Activated CD8-positive, alpha-beta T cell treated with anti-CD3 and anti-CD28 coated beads for 36 hours (primary cell): ENCODE measurements at regions of chr5 and their contacts with region 1.

Region 1: GRCh38 chr5:150458819-150459557 is 9.4 kb upstream of the RPS14 start:
- DNase-seq: peak; percentile 88
- ATAC-seq: peak; percentile 92
- H3K4me3 Mint-ChIP-seq: no peak overlapping the region
- H3K27ac Mint-ChIP-seq: no peak overlapping the region
- H3K4me1 Mint-ChIP-seq: peaks cover 34% of the 10 kb centered on the region
- H3K27me3 Mint-ChIP-seq: no peaks in the 10 kb centered on the region
- CTCF ChIP-seq: peak; percentile 80

Region 2: DNA sequence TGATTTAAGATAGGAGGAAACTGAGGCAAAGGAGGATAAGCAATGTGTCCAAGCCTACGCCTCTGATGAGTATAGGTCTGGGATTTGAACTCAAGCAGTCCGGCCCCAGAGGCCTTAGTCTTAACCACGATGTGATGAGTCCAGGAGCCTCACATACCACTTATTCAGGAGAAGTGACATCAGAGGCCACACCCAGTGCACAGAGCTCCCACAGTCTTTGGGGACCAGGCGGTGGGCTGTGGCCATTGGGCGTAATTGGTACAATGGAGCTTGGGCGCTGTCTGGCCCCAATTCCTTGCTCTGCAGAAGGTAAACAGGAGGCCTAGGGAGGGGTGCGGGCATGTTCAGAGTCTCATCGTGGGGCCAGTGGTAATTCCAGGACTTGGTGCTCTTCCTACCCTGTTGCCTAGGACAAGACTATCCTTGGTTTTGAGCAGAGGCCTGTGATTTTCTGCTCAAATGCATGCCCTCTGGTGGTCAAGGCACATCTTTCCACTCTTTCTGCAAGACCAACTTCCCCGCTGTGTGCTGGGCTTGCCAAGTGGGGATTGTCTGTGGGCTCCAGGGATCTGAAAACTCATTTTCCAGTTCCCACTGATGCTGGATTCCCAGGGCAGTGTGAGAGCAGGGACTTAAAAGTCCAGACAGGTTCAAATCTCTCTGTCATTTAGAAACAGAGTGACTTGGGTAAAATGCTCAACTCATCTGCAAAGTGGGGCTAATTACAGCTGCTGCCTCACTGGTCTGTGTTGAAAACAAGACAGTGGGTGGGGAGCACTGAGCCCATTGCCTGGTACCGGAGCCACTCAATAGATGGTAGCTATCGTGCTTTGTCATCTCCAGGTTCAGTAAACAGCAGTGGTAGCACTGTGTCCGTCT is 64.7 kb after region 1 on chr5:
- CTCF ChIA-PET with region 1: interaction called, 7 read pairs
- POLR2A ChIA-PET with region 1: no interaction called
- intact Hi-C with region 1: loop called (anchors 5 kb)
- DNase-seq: peak; percentile 35
- ATAC-seq: no peak
- H3K4me3 Mint-ChIP-seq: no peak overlapping the region
- H3K27ac Mint-ChIP-seq: no peak overlapping the region
- H3K4me1 Mint-ChIP-seq: no peaks in the 10 kb centered on the region
- H3K27me3 Mint-ChIP-seq: no peaks in the 10 kb centered on the region
- CTCF ChIP-seq: peak; percentile 35

Region 3: GRCh38 chr5:151174612-151175101 is 715.7 kb after region 1 on chr5:
- CTCF ChIA-PET with region 1: no interaction called
- POLR2A ChIA-PET with region 1: no interaction called
- intact Hi-C with region 1: no loop called
- DNase-seq: no peak
- ATAC-seq: no peak
- H3K4me3 Mint-ChIP-seq: no peak overlapping the region
- H3K27ac Mint-ChIP-seq: no peak overlapping the region
- H3K4me1 Mint-ChIP-seq: peaks cover 12% of the 10 kb centered on the region
- H3K27me3 Mint-ChIP-seq: no peaks in the 10 kb centered on the region
- CTCF ChIP-seq: no peak